ENCODE measurements at regions of chr22 and their contacts with region 1.

Region 1: DNA sequence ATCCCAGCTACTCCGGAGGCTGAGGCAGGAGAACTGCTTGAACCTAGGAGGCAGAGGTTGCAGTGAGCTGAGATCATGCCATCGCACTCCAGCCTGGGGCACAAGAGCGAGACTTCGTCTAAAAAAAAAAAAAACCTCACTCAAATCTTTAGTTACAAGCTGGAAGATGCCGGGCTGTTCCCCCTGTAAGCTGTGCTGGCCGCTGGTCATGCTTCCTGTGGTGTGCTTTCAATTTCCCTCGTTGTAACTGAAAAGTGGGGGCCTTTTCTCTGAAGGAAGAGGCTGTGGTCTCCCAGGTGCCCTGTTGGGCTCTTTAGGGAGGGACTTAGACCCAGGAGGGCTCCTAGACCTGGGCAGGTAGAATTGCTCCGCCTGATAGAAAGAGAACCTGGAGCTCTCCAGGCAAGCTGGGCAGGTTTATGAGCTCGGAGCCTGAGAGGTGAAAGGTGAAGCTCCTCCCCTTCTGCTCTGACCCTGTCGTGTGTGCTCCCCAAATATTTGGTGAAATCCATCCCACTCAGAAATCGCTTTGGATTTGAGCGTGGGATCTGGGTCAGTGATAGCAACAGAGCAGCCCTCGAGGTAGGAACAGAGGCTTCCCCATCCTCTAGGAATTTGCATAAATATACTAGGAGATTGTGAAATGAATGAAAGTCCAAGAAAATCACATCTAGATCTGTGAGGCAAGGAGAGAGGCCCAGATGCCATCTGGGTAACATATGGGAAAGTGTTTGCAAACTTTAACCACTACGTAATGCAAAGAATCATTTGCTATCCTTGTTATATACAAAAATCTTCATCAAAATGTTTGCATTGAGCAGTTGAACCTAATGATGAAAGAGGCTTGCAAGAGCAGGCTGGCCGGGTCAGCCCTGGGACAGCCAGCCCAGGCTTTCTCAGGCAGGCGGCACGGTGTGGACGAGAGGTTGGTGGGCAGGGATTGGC is 154.3 kb downstream of the FBXO7 start:
- DNase-seq: no peak
- H3K4me3 ChIP-seq: no peak overlapping the region
- H3K27ac ChIP-seq: peak overlapping the region in 1 of 2 donors; percentile 32
- H3K4me1 ChIP-seq: no peaks in the 10 kb centered on the region
- H3K27me3 ChIP-seq: no peaks in the 10 kb centered on the region
- CTCF ChIP-seq: no peak

Region 2: GRCh38 chr22:32607086-32607485 is 21.8 kb before region 1 on chr22:
- intact Hi-C with region 1: loop called (anchors 1 kb)
- DNase-seq: no peak
- H3K4me3 ChIP-seq: no peak overlapping the region
- H3K27ac ChIP-seq: no peak overlapping the region
- H3K4me1 ChIP-seq: no peaks in the 10 kb centered on the region
- H3K27me3 ChIP-seq: no peaks in the 10 kb centered on the region
- CTCF ChIP-seq: no peak

Measured in ascending aorta (tissue), 2 donors.